GM12878 (cell line): ENCODE measurements at regions of chr1 and their contacts with region 1.

Region 1: DNA sequence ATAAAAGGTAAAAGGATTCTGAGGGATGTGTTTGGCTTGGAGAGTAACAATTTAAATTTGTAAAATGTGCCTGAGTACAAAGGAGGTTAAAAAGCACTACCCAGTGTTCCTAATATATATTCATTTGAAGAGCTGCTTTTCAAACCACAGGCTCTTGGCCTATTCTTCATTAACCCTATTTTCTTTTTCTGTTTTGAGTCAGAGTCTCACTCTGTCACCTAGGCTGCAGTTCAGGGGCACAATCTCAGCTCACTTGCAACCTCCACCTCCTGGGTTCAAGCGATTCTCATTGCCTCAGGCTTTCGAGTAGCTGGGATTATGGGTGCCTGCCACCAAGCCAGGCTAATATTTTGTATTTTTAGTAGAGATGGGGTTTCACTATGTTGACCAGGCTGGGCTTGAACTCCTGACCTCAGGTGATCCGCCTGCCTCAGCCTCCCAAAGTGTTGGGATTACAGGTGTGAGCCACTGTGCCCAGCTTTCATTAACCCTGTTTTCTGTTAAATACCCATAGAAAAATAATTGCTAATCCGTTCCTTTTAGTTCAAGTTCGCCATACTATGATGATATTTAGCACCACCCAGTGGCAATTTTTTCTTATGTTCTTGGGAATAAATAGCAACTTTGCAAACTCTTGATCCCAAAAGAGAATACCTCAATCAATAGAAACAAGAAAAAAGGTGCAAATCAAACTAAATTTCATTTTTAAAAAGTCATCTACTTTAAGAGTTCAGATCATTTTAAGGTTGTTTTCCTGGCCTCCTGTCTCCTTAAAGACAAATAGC is 30.5 kb downstream of the ZBTB8OS start:
- DNase-seq: peak; percentile 72
- ATAC-seq: peak; percentile 90
- H3K4me3 ChIP-seq: peak overlapping the region; percentile 12; the same call in 1 of the 2 replicates
- H3K27ac ChIP-seq: peak overlapping the region; percentile 80
- H3K4me1 ChIP-seq: peaks cover 39% of the 10 kb centered on the region
- H3K27me3 ChIP-seq: no peaks in the 10 kb centered on the region
- CTCF ChIP-seq: peak in 2 of 3 experiments; percentile 26 to 29; a peak in 2 of 6 replicates
- EP300 ChIP-seq: peak; percentile 55 to 70; a peak in 3 of 4 replicates
- POLR2A ChIP-seq: no peak
- RAD21 ChIP-seq: peak; percentile 42

Region 2: DNA sequence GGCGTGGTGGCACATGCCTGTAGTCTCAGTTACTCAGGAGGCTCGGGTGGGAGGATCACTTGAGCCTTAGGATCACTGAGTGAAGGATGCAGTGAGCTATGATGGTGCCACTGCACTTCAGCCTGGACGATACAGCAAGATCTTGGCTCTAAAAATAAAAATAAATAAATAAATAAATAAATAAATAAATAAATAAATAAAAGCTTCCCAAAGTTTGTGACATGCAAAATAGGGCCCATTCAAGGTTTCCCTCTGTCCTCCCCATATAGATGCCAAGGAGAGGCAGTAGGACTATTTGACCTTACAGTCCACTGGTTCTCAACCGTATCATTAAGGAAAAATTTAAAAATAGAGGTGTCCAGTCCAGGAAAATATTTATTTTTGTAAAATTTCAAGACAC is 10.7 kb before region 1 on chr1:
- CTCF ChIA-PET with region 1: interaction called, 10 read pairs
- POLR2A ChIA-PET with region 1: no interaction called
- RAD21 ChIA-PET with region 1: no interaction called
- SMC1A ChIA-PET with region 1: interaction called, 7 read pairs
- in situ Hi-C with region 1: no loop called
- intact Hi-C with region 1: no loop called
- DNase-seq: no peak
- ATAC-seq: no peak
- H3K4me3 ChIP-seq: no peak overlapping the region
- H3K27ac ChIP-seq: no peak overlapping the region
- H3K4me1 ChIP-seq: peaks cover 5% of the 10 kb centered on the region; the same call in 1 of the 2 replicates
- H3K27me3 ChIP-seq: no peaks in the 10 kb centered on the region
- CTCF ChIP-seq: no peak
- EP300 ChIP-seq: no peak
- POLR2A ChIP-seq: no peak
- RAD21 ChIP-seq: no peak

Region 3: DNA sequence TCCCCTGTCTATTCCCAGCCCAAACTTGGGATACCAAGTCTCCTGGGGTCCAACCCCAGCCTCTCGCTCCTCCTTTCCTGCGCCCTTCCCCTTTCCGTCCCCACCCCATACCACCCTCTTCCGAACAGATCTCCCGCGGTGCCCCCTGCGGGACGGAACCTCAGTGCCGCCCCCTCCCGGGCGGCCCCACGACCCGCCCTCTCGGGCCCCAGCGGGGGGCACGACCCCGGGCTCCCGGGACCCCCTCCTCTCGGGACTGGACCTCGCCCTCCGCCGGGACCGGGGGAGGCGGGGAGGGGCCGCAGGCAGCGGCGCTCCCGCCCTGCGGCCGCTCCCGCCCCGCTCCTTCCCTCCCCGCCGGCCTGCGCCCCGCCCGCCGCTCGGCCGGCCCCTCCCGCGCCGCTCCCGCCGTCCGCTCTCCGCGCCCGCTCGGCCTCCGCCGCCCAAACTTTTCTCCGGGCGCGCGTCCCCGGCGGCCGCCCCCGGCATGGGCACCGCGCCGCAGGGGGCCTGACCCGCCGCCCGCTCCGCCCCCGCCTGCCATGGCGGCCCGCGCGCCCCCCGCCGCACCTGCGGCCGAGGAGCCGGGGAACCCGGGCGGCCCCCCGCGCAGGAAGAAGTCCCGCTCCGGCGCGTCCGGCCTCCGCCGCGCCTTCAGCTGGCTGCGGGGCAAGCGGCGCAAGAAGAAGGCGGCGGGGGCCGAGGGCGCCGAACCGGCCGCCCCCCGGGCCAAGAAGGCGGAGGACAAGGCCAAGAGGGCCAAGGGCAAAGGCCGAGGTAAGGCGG is 121.7 kb after region 1 on chr1:
- CTCF ChIA-PET with region 1: no interaction called
- POLR2A ChIA-PET with region 1: interaction called, 12 read pairs
- RAD21 ChIA-PET with region 1: no interaction called
- SMC1A ChIA-PET with region 1: no interaction called
- in situ Hi-C with region 1: no loop called
- intact Hi-C with region 1: no loop called
- DNase-seq: no peak
- ATAC-seq: peak; percentile 73
- H3K4me3 ChIP-seq: peak overlapping the region; percentile 57; the same call in 1 of the 2 replicates
- H3K27ac ChIP-seq: no peak overlapping the region
- H3K4me1 ChIP-seq: no peaks in the 10 kb centered on the region
- H3K27me3 ChIP-seq: peaks cover 5 to 11% of the 10 kb centered on the region in 2 experiments
- CTCF ChIP-seq: peak in 2 of 3 experiments; percentile 21 to 27; a peak in 4 of 6 replicates
- EP300 ChIP-seq: no peak
- POLR2A ChIP-seq: no peak
- RAD21 ChIP-seq: no peak